ENCODE measurements at regions of chr3 and their contacts with region 1.

Region 1: GRCh38 chr3:15623535-15624440 is 22.2 kb downstream of the BTD start:
- DNase-seq: no peak
- ATAC-seq: no peak
- H3K4me3 ChIP-seq: no peak overlapping the region
- H3K27ac ChIP-seq: no peak overlapping the region
- H3K4me1 ChIP-seq: no peaks in the 10 kb centered on the region
- H3K27me3 ChIP-seq: no peaks in the 10 kb centered on the region
- CTCF ChIP-seq: no peak

Region 2: GRCh38 chr3:15578289-15578867 is 45.4 kb before region 1 on chr3:
- CTCF ChIA-PET with region 1: no interaction called
- POLR2A ChIA-PET with region 1: no interaction called
- intact Hi-C with region 1: no loop called
- DNase-seq: no peak
- ATAC-seq: no peak
- H3K4me3 ChIP-seq: no peak overlapping the region
- H3K27ac ChIP-seq: no peak overlapping the region
- H3K4me1 ChIP-seq: no peaks in the 10 kb centered on the region
- H3K27me3 ChIP-seq: no peaks in the 10 kb centered on the region
- CTCF ChIP-seq: no peak

Region 3: GRCh38 chr3:15601397-15602145 is 22.2 kb before region 1 on chr3 and contains the starts of genes BTD and HACL1:
- CTCF ChIA-PET with region 1: interaction called, 16 read pairs
- POLR2A ChIA-PET with region 1: no interaction called
- intact Hi-C with region 1: no loop called
- DNase-seq: peak; percentile 99
- ATAC-seq: peak; percentile 94
- H3K4me3 ChIP-seq: peak within 1 kb of the TSS; percentile 88
- H3K27ac ChIP-seq: peak within 1 kb of the TSS; percentile 53
- H3K4me1 ChIP-seq: peaks cover 21% of the 10 kb centered on the region; the same call in 1 of the 2 replicates
- H3K27me3 ChIP-seq: no peaks in the 10 kb centered on the region
- CTCF ChIP-seq: peak; percentile 28
- total RNA-seq, gene BTD: 11.7 and 17.1 TPM in 2 replicates
- total RNA-seq, gene HACL1: 20.3 and 25.5 TPM in 2 replicates

Region 4: DNA sequence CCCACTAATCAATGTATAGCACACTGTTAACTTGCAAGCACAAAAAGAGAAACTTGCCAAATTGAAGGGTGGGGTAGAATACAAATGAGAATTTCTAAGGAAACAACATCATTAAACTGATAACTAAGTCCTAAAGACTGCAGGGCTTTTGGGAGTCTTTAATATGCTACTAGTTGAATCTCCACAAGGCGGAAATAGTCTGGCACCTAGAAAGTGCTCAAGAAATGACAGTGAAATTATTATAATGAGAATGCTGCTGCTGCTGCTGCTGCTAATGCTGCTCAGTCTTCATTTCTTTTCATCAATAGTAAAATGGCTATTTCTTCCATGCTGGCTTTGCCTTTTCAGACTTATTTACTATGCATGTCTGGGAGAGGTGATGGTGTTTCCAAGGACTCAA is 69.6 kb after region 1 on chr3:
- CTCF ChIA-PET with region 1: no interaction called
- POLR2A ChIA-PET with region 1: no interaction called
- intact Hi-C with region 1: no loop called
- DNase-seq: peak; percentile 46
- ATAC-seq: peak; percentile 74
- H3K4me3 ChIP-seq: no peak overlapping the region
- H3K27ac ChIP-seq: no peak overlapping the region
- H3K4me1 ChIP-seq: no peaks in the 10 kb centered on the region
- H3K27me3 ChIP-seq: no peaks in the 10 kb centered on the region
- CTCF ChIP-seq: peak; percentile 48

Measured in PC-3 (cell line).